Activated CD8-positive, alpha-beta T cell treated with anti-CD3 and anti-CD28 coated beads for 36 hours (primary cell): ENCODE measurements at regions of chr10 and their contacts with region 1.

Region 1: GRCh38 chr10:123994417-123995081 is 98.8 kb downstream of the CHST15 start:
- DNase-seq: peak; percentile 84
- ATAC-seq: peak; percentile 86
- H3K4me3 Mint-ChIP-seq: peak overlapping the region; percentile 20
- H3K27ac Mint-ChIP-seq: no peak overlapping the region
- H3K4me1 Mint-ChIP-seq: peaks cover 9% of the 10 kb centered on the region
- H3K27me3 Mint-ChIP-seq: peaks cover 43% of the 10 kb centered on the region
- CTCF ChIP-seq: peak; percentile 99

Region 2: DNA sequence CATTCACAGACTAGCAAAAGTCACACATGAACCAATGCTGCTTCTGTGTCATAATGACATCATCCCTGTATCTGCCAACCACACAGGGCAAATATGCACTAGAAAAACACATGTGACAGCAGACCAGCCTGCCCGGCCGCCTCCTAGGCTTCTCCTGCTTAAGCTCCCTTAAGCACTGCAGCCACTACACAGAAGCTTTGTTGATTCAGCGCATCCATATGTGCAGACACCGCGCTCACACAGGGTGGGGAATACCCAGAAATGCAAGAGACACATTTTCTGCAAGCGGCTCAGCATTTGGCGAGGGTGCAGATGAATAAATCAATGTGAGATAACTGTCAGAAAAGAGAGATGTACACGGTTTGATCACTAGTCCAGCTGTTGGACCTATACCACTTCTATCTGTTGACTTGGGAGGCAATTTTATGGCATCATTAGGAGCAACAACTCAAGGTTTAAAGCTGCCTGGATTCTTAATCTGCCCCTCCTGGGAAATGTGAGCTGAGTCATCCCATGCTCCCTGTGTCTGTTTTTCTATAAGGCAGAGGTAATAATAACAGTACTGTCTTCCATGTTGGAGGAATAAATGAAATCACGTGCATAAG is 136.4 kb before region 1 on chr10:
- CTCF ChIA-PET with region 1: no interaction called
- POLR2A ChIA-PET with region 1: no interaction called
- intact Hi-C with region 1: no loop called
- DNase-seq: no peak
- ATAC-seq: no peak
- H3K4me3 Mint-ChIP-seq: no peak overlapping the region
- H3K27ac Mint-ChIP-seq: no peak overlapping the region
- H3K4me1 Mint-ChIP-seq: no peaks in the 10 kb centered on the region
- H3K27me3 Mint-ChIP-seq: peaks cover 2% of the 10 kb centered on the region
- CTCF ChIP-seq: no peak

Region 3: DNA sequence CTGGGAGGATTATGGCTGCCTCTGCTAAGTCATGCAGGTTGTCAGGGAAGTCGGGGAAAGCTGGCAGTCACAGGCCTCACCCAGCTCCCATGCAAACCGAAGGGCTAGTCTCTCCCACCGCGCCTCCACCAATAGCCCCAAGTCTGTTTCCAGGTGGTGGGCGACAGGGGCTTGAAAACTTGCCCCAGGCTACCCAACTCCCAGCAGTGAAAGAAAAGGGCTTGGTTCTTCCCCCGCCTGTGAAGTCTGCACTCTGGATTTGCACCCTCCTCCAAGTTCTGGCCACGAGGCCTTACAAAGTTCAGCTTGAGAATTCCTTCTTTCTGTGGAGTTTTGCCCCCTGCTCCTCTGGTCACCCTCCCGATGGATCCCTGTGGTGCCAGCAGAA is 198.8 kb after region 1 on chr10:
- CTCF ChIA-PET with region 1: interaction called, 10 read pairs
- POLR2A ChIA-PET with region 1: no interaction called
- intact Hi-C with region 1: no loop called
- DNase-seq: no peak
- ATAC-seq: no peak
- H3K4me3 Mint-ChIP-seq: no peak overlapping the region
- H3K27ac Mint-ChIP-seq: no peak overlapping the region
- H3K4me1 Mint-ChIP-seq: no peaks in the 10 kb centered on the region
- H3K27me3 Mint-ChIP-seq: peaks cover 16% of the 10 kb centered on the region
- CTCF ChIP-seq: no peak

Region 4: DNA sequence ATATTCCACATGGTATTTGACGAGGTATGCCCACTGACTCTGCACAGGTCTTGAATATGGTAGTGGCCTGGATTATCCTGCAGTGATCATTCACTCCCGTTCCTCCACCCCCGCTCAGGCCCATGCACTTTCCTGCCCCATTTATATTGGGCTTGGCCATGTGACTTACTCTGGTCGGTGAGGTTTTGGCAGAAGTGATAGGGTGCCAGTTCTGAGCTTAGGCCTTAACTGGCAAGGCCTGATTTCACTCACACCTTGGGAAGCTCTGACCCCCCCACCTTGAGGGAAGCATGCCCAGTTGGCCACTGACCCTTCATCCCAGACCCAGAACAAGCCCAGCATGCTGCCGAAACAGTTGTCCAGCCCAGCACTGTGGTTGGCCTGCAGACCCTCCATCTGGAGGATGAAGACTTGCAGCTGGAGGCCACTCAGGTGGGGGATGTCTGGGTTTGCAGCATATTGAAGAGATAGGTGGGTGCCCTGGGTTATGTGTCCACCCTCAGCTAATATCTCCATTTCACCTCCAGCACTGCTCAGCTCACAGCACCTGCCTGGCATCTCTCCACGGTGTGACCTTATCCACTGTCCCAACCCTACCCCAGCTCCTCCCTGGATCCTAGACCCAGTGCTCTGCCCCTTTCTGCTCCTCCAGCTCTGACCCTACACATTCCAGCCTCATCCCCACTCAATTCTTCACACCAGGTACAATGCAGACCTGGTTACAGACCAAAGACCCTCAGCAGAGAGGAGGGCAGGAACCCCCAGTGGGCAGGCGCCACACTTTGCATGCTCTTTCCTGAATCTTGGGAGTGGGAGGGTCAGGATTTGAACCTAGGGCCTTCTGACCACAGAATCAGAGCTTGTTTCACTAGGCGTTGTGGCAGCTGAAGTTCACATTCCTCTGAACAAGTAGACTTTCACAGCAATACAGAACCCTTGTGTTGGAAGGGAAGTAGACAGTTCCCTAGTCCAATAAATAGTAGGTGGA is 236.9 kb after region 1 on chr10:
- CTCF ChIA-PET with region 1: interaction called, 13 read pairs
- POLR2A ChIA-PET with region 1: no interaction called
- intact Hi-C with region 1: no loop called
- DNase-seq: peak; percentile 87
- ATAC-seq: peak; percentile 52
- H3K4me3 Mint-ChIP-seq: no peak overlapping the region
- H3K27ac Mint-ChIP-seq: peak overlapping the region; percentile 52
- H3K4me1 Mint-ChIP-seq: peaks cover 2% of the 10 kb centered on the region
- H3K27me3 Mint-ChIP-seq: no peaks in the 10 kb centered on the region
- CTCF ChIP-seq: no peak

Region 5: GRCh38 chr10:124251317-124252065 is 256.9 kb after region 1 on chr10:
- CTCF ChIA-PET with region 1: interaction called, 14 read pairs
- POLR2A ChIA-PET with region 1: no interaction called
- intact Hi-C with region 1: no loop called
- DNase-seq: no peak
- ATAC-seq: no peak
- H3K4me3 Mint-ChIP-seq: no peak overlapping the region
- H3K27ac Mint-ChIP-seq: no peak overlapping the region
- H3K4me1 Mint-ChIP-seq: no peaks in the 10 kb centered on the region
- H3K27me3 Mint-ChIP-seq: peaks cover 3% of the 10 kb centered on the region
- CTCF ChIP-seq: no peak

Region 6: DNA sequence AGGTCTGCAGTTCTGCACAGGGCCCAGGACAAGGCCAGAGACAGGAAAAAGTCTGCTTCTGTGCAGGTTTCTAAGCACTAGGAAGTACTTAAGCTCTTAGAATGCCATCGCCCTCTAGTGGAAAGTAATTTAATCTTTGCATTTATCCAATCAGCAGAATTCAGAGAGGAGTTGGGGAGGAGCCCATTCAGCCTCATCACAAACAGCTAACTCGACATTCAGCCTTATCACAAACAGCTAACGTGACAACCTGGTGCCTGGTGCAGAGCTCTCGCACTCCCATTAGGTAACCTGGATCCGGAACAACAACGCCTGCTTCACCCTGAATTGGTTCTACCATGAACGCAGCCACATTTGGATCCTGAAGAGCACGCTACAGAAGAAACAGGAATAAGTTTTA is 409.0 kb after region 1 on chr10:
- CTCF ChIA-PET with region 1: interaction called, 193 read pairs
- POLR2A ChIA-PET with region 1: no interaction called
- intact Hi-C with region 1: no loop called
- DNase-seq: peak; percentile 48
- ATAC-seq: peak; percentile 99
- H3K4me3 Mint-ChIP-seq: no peak overlapping the region
- H3K27ac Mint-ChIP-seq: peak overlapping the region; percentile 51
- H3K4me1 Mint-ChIP-seq: peaks cover 4% of the 10 kb centered on the region
- H3K27me3 Mint-ChIP-seq: no peaks in the 10 kb centered on the region
- CTCF ChIP-seq: peak; percentile 68